ENCODE measurements at regions of chr1 and their contacts with region 1.

Region 1: GRCh38 chr1:96966536-96967138 is 245.1 kb downstream of the PTBP2 start:
- DNase-seq: peak; percentile 33
- H3K4me3 ChIP-seq: no peak overlapping the region
- CTCF ChIP-seq: peak; percentile 84

Region 2: GRCh38 chr1:96912248-96912647 is 54.4 kb before region 1 on chr1:
- CTCF ChIA-PET with region 1: no interaction called
- POLR2A ChIA-PET with region 1: no interaction called
- DNase-seq: no peak
- H3K4me3 ChIP-seq: no peak overlapping the region
- CTCF ChIP-seq: no peak

Region 3: GRCh38 chr1:96955307-96956012 is 11.2 kb before region 1 on chr1:
- CTCF ChIA-PET with region 1: interaction called, 11 read pairs
- POLR2A ChIA-PET with region 1: no interaction called
- DNase-seq: no peak
- H3K4me3 ChIP-seq: no peak overlapping the region
- CTCF ChIP-seq: no peak

Region 4: DNA sequence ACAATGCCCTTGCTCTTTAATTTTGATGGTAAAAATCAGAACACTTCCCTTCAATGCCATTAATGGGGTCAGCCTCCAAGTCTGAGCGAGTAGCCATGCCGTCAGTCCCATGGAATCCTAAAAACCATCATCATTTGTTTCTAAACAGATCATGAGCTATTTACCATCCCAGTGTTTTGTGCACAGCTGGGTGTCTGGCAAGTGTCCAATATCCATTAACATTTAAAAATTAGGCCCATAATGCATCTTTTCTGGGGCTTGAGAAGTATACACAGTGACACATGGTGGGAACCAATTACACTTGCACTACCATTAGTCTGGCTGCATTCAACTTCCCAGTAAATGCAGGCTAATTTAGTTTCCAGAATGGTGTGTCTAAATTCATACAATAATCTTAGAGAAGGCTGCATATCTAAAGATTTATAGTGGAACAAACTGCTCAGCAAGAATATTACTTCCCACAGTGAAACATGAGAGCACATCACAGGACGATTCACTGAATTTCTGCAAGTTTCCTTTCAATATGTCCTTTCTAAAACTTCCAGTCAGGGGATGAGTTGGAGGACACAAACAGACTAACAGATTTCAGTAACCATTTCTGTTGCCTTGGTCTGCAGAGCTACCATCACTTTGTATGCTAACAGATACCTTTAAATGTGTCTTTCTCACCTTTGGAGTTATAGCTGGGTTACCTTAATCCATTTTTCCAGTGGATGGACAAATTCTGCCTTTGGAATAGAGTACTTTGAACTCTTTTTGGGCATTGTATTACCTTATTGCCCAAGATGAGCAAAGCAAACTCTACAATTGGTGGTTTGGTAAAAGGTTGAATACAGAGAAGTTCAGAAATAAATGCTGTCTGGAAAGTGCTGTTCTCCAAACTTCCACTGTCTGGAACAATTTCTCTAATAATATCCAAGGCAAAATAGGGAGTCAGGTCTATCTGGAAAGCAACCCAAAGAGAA is 12.9 kb after region 1 on chr1:
- CTCF ChIA-PET with region 1: interaction called, 29 read pairs
- POLR2A ChIA-PET with region 1: no interaction called
- DNase-seq: no peak
- H3K4me3 ChIP-seq: no peak overlapping the region
- CTCF ChIP-seq: no peak

Region 5: GRCh38 chr1:97050501-97050900 is 83.9 kb after region 1 on chr1:
- CTCF ChIA-PET with region 1: interaction called, 48 read pairs
- POLR2A ChIA-PET with region 1: no interaction called
- DNase-seq: no peak
- H3K4me3 ChIP-seq: no peak overlapping the region
- CTCF ChIP-seq: peak; percentile 39

Measured in AG04449 (cell line).